Ovary (tissue), 10 donors: ENCODE measurements at regions of chr4 and their contacts with region 1.

Region 1: GRCh38 chr4:40976343-40976742 is 226.6 kb downstream of the NSUN7 start:
- DNase-seq: peak in 2 of 5 donors; percentile 45 to 70
- H3K4me3 ChIP-seq: no peak overlapping the region
- H3K27ac ChIP-seq: no peak overlapping the region
- H3K4me1 ChIP-seq: no peaks in the 10 kb centered on the region
- H3K27me3 ChIP-seq: no peaks in the 10 kb centered on the region
- CTCF ChIP-seq: peak in 2 of 3 donors; percentile 53 to 79
- EP300 ChIP-seq: no peak
- POLR2A ChIP-seq: no peak

Region 2: GRCh38 chr4:40924096-40924792 is 52.1 kb before region 1 on chr4:
- intact Hi-C with region 1: loop called in 1 of 4 experiments (anchors 10 kb)
- DNase-seq: peak in 4 of 5 donors; percentile 53 to 66 (median 56)
- H3K4me3 ChIP-seq: no peak overlapping the region
- H3K27ac ChIP-seq: no peak overlapping the region
- H3K4me1 ChIP-seq: no peaks in the 10 kb centered on the region
- H3K27me3 ChIP-seq: no peaks in the 10 kb centered on the region
- CTCF ChIP-seq: peak in 2 of 3 donors; percentile 22 to 37
- EP300 ChIP-seq: no peak
- POLR2A ChIP-seq: no peak